CD8-positive, alpha-beta T cell (primary cell): ENCODE measurements at regions of chr1 and their contacts with region 1.

Region 1: DNA sequence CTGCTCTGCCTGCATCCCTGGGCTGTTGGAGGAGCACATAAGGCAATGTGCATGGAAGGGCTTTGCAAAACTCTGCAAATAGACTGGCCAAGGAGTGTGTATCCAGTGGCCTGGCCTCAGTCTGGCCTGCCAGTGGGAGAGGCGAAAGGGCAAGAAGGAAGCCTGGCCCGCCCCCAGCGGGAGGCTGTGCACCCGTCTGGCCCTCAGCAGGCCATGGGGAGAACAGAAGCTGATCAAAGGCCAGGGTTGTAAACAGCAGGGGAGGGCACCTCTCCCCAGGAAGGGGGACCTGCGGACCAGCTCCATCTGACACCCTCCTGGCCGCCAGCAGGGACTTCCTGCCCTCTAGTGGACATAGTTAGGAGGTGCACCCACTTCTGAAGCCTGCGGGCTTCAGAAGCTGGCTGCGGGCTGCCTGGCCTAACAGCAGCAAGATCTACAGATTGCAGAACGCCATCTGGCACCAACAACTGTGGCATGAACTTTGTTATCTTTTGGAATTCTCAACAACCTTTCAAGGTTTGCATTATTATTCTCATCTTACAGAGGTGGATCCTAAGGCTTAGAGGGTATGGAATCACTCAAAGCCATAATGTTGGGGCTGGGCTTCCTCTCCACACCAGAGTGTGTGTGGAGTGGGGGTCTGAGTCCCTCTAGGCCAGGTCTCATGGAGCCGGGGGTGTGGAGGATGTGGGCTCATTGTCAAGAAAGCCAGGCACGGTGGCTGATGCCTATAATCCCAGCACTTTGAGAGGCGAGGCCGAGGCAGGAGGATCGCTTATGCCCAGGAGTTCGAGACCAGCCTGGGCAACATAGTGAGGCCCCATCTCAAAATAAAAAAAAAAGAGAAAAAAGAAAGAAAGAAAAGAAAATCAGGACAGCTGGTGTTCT is 18.9 kb upstream of the CDK18 start:
- DNase-seq: peak; percentile 39 to 88 (median 68)
- ATAC-seq: peak; percentile 65
- H3K4me3 ChIP-seq: no peak overlapping the region
- H3K4me3 Mint-ChIP-seq: no peak overlapping the region
- H3K27ac ChIP-seq: no peak overlapping the region
- H3K27ac Mint-ChIP-seq: no peak overlapping the region
- H3K4me1 ChIP-seq: peaks cover 19% of the 10 kb centered on the region
- H3K4me1 Mint-ChIP-seq: peaks cover 39% of the 10 kb centered on the region
- H3K27me3 ChIP-seq: no peaks in the 10 kb centered on the region
- H3K27me3 Mint-ChIP-seq: peaks cover 32% of the 10 kb centered on the region
- CTCF ChIP-seq: peak; percentile 81

Region 2: DNA sequence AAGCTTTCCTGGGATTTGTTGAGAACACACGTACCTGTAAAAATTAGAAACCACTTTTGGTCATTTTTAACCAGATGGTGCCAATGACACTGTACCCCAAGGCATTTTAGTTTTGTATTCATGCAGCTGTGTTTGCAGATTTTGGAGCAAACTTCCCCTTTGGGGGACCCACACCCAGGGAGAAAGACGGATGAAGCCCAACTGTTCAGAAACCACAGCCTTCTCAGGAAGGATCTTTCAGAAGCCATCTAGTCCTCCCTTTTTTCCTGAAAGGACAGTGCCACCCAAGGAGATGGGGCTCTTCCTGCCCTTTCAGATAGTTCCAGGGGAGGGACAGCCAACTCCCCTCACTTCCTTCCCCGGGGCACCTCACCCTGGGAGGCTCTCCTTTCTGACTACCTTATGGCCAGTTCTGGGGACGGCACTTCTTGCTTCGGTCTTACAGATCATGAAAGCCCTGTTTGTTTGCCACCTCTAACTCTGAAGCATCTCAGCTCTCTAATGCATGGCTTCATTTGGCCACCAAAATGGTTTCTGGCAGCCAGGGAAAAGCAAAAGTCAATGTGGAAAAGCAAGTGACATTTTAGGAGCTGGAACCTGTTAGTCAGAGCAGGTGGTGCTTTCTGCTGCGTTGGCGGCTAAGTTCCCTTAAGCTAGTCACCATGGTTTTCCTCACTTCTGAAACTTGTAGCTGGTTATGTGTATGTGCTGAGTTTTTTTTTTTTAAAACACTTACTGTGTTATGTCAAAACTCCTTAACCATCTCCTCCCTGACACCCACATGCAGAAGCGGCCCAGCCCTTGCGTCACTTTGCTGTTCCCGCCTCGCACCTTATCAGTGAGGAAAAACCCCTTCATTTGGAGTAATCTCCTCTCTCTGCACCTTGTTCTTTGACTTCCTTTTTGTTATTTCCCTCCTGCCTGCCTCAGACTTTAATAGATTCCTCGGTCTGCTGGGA is 247.8 kb before region 1 on chr1:
- CTCF ChIA-PET with region 1: no interaction called
- POLR2A ChIA-PET with region 1: no interaction called
- intact Hi-C with region 1: no loop called
- DNase-seq: peak in 1 of 9 experiments; percentile 36
- ATAC-seq: no peak
- H3K4me3 ChIP-seq: no peak overlapping the region
- H3K4me3 Mint-ChIP-seq: no peak overlapping the region
- H3K27ac ChIP-seq: no peak overlapping the region
- H3K27ac Mint-ChIP-seq: no peak overlapping the region
- H3K4me1 ChIP-seq: no peaks in the 10 kb centered on the region
- H3K4me1 Mint-ChIP-seq: peaks cover 10% of the 10 kb centered on the region
- H3K27me3 ChIP-seq: no peaks in the 10 kb centered on the region
- H3K27me3 Mint-ChIP-seq: no peaks in the 10 kb centered on the region
- CTCF ChIP-seq: no peak

Region 3: GRCh38 chr1:205335643-205336091 is 149.9 kb before region 1 on chr1:
- CTCF ChIA-PET with region 1: interaction called, 45 read pairs
- POLR2A ChIA-PET with region 1: no interaction called
- intact Hi-C with region 1: loop called in 1 of 2 experiments (anchors 5 kb)
- DNase-seq: peak; percentile 52 to 86 (median 80)
- ATAC-seq: peak; percentile 99
- H3K4me3 ChIP-seq: no peak overlapping the region
- H3K4me3 Mint-ChIP-seq: no peak overlapping the region
- H3K27ac ChIP-seq: no peak overlapping the region
- H3K27ac Mint-ChIP-seq: no peak overlapping the region
- H3K4me1 ChIP-seq: no peaks in the 10 kb centered on the region
- H3K4me1 Mint-ChIP-seq: no peaks in the 10 kb centered on the region
- H3K27me3 ChIP-seq: no peaks in the 10 kb centered on the region
- H3K27me3 Mint-ChIP-seq: no peaks in the 10 kb centered on the region
- CTCF ChIP-seq: peak; percentile 85

Region 4: DNA sequence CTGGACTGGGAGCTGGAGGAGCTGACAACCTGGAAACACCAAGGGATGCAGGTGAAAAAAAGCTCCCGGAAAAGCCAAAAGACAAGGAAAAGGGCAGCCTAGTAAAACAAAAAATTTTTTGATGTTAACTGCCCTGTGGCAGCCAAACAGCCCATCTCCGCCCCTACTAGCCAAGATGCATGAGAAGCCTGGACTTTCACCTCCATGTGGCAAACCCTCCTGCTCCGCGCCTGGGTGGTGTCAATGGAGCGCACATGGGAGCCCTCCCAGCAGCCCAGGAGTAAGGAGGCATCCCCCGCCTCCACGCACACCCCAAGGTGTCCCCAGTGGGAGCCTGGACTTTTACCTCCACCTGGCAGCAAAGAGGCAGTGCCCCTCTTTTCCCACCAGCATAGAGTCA is 94.2 kb before region 1 on chr1:
- CTCF ChIA-PET with region 1: interaction called, 106 read pairs
- POLR2A ChIA-PET with region 1: interaction called, 11 read pairs
- intact Hi-C with region 1: no loop called
- DNase-seq: no peak
- ATAC-seq: no peak
- H3K4me3 ChIP-seq: no peak overlapping the region
- H3K4me3 Mint-ChIP-seq: no peak overlapping the region
- H3K27ac ChIP-seq: no peak overlapping the region
- H3K27ac Mint-ChIP-seq: no peak overlapping the region
- H3K4me1 ChIP-seq: no peaks in the 10 kb centered on the region
- H3K4me1 Mint-ChIP-seq: no peaks in the 10 kb centered on the region
- H3K27me3 ChIP-seq: peaks cover 0 to 5% of the 10 kb centered on the region in 2 experiments
- H3K27me3 Mint-ChIP-seq: peaks cover 24% of the 10 kb centered on the region
- CTCF ChIP-seq: no peak

Region 5: GRCh38 chr1:205416322-205416721 is 69.3 kb before region 1 on chr1:
- CTCF ChIA-PET with region 1: interaction called, 18 read pairs
- POLR2A ChIA-PET with region 1: no interaction called
- intact Hi-C with region 1: no loop called
- DNase-seq: no peak
- ATAC-seq: no peak
- H3K4me3 ChIP-seq: no peak overlapping the region
- H3K4me3 Mint-ChIP-seq: no peak overlapping the region
- H3K27ac ChIP-seq: no peak overlapping the region
- H3K27ac Mint-ChIP-seq: no peak overlapping the region
- H3K4me1 ChIP-seq: no peaks in the 10 kb centered on the region
- H3K4me1 Mint-ChIP-seq: no peaks in the 10 kb centered on the region
- H3K27me3 ChIP-seq: peaks cover 0 to 3% of the 10 kb centered on the region in 2 experiments
- H3K27me3 Mint-ChIP-seq: peaks cover 4% of the 10 kb centered on the region
- CTCF ChIP-seq: no peak

Region 6: GRCh38 chr1:205440476-205441317 is 44.9 kb before region 1 on chr1:
- CTCF ChIA-PET with region 1: interaction called, 18 read pairs
- POLR2A ChIA-PET with region 1: no interaction called
- intact Hi-C with region 1: loop called (anchors 5 kb)
- DNase-seq: peak; percentile 32 to 85 (median 75)
- ATAC-seq: peak; percentile 95
- H3K4me3 ChIP-seq: peak overlapping the region; percentile 38 to 53
- H3K4me3 Mint-ChIP-seq: peak overlapping the region; percentile 82
- H3K27ac ChIP-seq: peak overlapping the region; percentile 47 to 77
- H3K27ac Mint-ChIP-seq: peak overlapping the region; percentile 92
- H3K4me1 ChIP-seq: peaks cover 25% of the 10 kb centered on the region
- H3K4me1 Mint-ChIP-seq: peaks cover 42% of the 10 kb centered on the region
- H3K27me3 ChIP-seq: no peaks in the 10 kb centered on the region
- H3K27me3 Mint-ChIP-seq: no peaks in the 10 kb centered on the region
- CTCF ChIP-seq: no peak

Region 7: GRCh38 chr1:205523891-205524793 is 38.6 kb after region 1 on chr1:
- CTCF ChIA-PET with region 1: interaction called, 366 read pairs
- POLR2A ChIA-PET with region 1: interaction called, 13 read pairs
- intact Hi-C with region 1: loop called in 1 of 2 experiments (anchors 1 kb)
- DNase-seq: peak; percentile 47 to 82 (median 76)
- ATAC-seq: peak; percentile 70
- H3K4me3 ChIP-seq: no peak overlapping the region
- H3K4me3 Mint-ChIP-seq: no peak overlapping the region
- H3K27ac ChIP-seq: no peak overlapping the region
- H3K27ac Mint-ChIP-seq: no peak overlapping the region
- H3K4me1 ChIP-seq: no peaks in the 10 kb centered on the region
- H3K4me1 Mint-ChIP-seq: peaks cover under 1% of the 10 kb centered on the region
- H3K27me3 ChIP-seq: no peaks in the 10 kb centered on the region
- H3K27me3 Mint-ChIP-seq: no peaks in the 10 kb centered on the region
- CTCF ChIP-seq: peak; percentile 64

Region 8: GRCh38 chr1:205711104-205712020 is 225.8 kb after region 1 on chr1:
- CTCF ChIA-PET with region 1: no interaction called
- POLR2A ChIA-PET with region 1: no interaction called
- intact Hi-C with region 1: no loop called
- DNase-seq: peak in 8 of 9 experiments; percentile 34 to 86 (median 66)
- ATAC-seq: peak; percentile 95
- H3K4me3 ChIP-seq: no peak overlapping the region
- H3K4me3 Mint-ChIP-seq: no peak overlapping the region
- H3K27ac ChIP-seq: no peak overlapping the region
- H3K27ac Mint-ChIP-seq: no peak overlapping the region
- H3K4me1 ChIP-seq: no peaks in the 10 kb centered on the region
- H3K4me1 Mint-ChIP-seq: peaks cover 13% of the 10 kb centered on the region
- H3K27me3 ChIP-seq: no peaks in the 10 kb centered on the region
- H3K27me3 Mint-ChIP-seq: no peaks in the 10 kb centered on the region
- CTCF ChIP-seq: peak; percentile 90